ENCODE measurements at regions of chr22 and their contacts with region 1.

Region 1: DNA sequence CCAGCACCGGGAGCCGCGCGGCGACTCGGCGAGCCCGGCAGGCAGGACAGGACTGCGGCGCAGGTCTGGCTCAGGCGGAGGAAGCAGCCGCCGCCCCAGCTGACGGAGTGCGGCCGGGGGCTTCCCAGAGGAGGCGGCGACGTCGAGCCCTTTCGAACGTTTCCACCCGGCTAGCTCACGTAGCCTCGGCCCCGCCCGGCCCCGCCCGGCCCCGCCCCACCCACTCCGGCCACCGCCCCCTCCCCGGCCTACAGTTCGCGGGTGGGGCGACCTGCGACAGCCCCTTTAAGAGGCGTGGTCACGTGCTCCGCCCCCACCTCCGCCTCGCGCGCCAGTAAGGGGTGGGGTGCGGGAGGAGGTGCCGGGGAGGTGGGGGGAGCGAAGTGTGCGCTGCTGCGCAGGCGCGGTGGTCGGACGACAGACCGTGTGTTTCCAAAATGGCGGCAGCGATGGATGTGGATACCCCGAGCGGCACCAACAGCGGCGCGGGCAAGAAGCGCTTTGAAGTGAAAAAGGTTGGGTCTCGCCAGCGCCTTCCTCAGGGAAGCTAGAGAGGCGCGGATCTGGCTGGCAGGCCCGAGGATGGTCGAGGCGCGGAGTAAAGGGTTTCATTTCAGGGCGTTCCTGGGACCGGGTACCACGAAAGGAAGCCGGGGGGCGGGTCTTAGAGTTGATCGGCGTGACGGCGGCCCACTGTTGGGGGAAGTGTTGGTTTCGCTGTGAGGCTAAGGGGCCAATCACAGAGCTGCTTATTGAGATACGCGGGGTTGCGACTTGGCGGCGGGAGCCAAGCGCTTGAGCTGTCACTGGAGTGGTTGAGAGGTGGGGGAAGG is at the start of gene RBX1:
- DNase-seq: peak; percentile 97 to 100 (median 99)
- ATAC-seq: peak; percentile 75
- H3K4me3 ChIP-seq: peak within 1 kb of the TSS; percentile 96
- H3K4me3 Mint-ChIP-seq: peak within 1 kb of the TSS; percentile 95
- H3K27ac ChIP-seq: peak within 1 kb of the TSS; percentile 98 to 100
- H3K27ac Mint-ChIP-seq: peak within 1 kb of the TSS; percentile 98
- H3K4me1 ChIP-seq: peaks cover 34% of the 10 kb centered on the region
- H3K4me1 Mint-ChIP-seq: peaks cover 40% of the 10 kb centered on the region
- H3K27me3 ChIP-seq: no peaks in the 10 kb centered on the region
- H3K27me3 Mint-ChIP-seq: no peaks in the 10 kb centered on the region
- CTCF ChIP-seq: no peak
- total RNA-seq, gene RBX1: 19.8 to 21.6 TPM

Region 2: DNA sequence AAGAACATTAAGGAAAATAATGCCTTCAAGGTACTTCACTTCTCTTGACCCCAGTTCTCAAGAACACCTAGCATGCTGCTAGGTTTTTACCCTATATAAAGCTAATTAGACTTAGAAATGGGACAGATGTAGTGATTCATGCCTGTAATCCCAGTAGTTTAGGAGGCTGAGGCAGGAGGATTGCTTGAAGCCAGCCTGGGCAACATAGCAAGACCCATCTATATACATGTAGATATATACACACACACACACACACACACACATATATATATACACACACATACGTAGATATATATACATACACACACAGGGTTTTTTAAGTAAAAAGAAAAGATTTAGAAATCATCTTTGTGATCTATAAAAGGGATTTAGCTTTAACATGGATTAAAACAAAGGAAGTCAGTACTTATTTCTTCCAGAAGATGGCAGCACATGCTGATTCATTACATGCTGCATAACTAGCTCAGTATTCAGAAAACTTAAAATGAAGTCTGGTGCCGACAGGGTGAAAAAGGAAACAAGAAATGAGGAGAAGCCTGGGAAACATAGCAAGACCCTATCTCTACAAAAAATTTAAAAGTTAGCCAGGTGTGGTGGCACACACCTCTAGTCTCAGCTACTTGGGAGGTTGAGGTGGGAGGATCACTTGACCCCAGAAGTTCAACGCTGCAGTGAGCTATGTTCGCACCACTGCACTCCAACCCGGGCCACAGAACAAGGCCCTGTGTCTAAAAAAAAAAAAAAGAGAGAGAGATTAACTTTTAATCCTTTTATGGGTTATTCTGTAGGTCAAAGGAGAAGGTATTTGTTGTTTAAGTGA is 28.5 kb before region 1 on chr22:
- CTCF ChIA-PET with region 1: interaction called, 10 read pairs
- POLR2A ChIA-PET with region 1: interaction called, 30 read pairs
- intact Hi-C with region 1: loop called (anchors 1 to 2 kb)
- DNase-seq: peak in 6 of 14 experiments; percentile 1 to 84 (median 46)
- ATAC-seq: peak; percentile 98
- H3K4me3 ChIP-seq: no peak overlapping the region
- H3K4me3 Mint-ChIP-seq: peak overlapping the region; percentile 0
- H3K27ac ChIP-seq: no peak overlapping the region
- H3K27ac Mint-ChIP-seq: no peak overlapping the region
- H3K4me1 ChIP-seq: peaks cover 3% of the 10 kb centered on the region
- H3K4me1 Mint-ChIP-seq: peaks cover 5% of the 10 kb centered on the region
- H3K27me3 ChIP-seq: no peaks in the 10 kb centered on the region
- H3K27me3 Mint-ChIP-seq: no peaks in the 10 kb centered on the region
- CTCF ChIP-seq: peak; percentile 78

Region 3: GRCh38 chr22:40982482-40983385 is 31.6 kb after region 1 on chr22:
- CTCF ChIA-PET with region 1: no interaction called
- POLR2A ChIA-PET with region 1: no interaction called
- intact Hi-C with region 1: no loop called
- DNase-seq: no peak
- ATAC-seq: no peak
- H3K4me3 ChIP-seq: no peak overlapping the region
- H3K4me3 Mint-ChIP-seq: no peak overlapping the region
- H3K27ac ChIP-seq: no peak overlapping the region
- H3K27ac Mint-ChIP-seq: no peak overlapping the region
- H3K4me1 ChIP-seq: no peaks in the 10 kb centered on the region
- H3K4me1 Mint-ChIP-seq: no peaks in the 10 kb centered on the region
- H3K27me3 ChIP-seq: no peaks in the 10 kb centered on the region
- H3K27me3 Mint-ChIP-seq: no peaks in the 10 kb centered on the region
- CTCF ChIP-seq: no peak

Region 4: DNA sequence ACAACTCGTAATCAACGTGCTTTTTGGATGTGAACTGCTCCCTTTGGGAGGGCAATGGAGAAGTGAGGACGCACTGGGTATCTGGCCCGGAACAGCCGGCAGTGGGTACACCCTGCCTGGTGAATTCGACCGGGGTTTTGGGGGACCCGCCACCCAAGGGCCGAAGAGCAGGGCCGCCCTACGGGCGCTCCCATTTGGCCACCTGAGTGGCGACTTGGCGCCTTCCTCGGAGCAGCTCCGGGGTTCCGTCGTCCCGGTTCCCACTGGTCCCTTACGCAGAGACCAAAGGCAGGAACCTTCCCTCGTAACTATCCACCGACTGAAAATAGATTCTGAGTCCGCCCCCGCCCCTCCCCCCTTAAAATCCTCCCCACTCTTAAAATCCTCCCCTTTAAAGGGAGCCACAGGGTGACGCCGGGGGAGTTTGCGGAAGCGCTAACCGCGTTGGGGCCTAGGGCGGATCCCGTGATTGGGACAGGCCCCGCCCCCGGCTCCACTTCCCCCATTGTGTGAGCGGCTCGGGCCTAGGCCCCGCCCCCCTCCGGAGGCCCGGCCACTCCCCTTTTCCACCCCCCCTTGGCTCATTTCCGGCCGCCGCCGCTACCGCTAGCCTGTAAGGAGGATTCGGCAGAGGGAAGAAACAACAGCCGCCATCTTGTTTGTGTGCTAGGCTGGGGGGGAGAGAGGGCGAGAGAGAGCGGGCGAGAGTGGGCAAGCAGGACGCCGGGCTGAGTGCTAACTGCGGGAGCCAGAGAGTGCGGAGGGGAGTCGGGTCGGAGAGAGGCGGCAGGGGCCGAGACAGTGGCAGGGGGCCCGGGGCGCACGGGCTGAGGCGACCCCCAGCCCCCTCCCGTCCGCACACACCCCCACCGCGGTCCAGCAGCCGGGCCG is 140.2 kb after region 1 on chr22:
- CTCF ChIA-PET with region 1: interaction called, 3 read pairs
- POLR2A ChIA-PET with region 1: interaction called, 187 read pairs
- intact Hi-C with region 1: loop called (anchors 1 kb)
- DNase-seq: peak; percentile 98 to 100 (median 99)
- ATAC-seq: peak; percentile 85
- H3K4me3 ChIP-seq: peak overlapping the region; percentile 97
- H3K4me3 Mint-ChIP-seq: peak overlapping the region; percentile 99
- H3K27ac ChIP-seq: peak overlapping the region; percentile 97 to 100
- H3K27ac Mint-ChIP-seq: peak overlapping the region; percentile 98
- H3K4me1 ChIP-seq: peaks cover 15% of the 10 kb centered on the region
- H3K4me1 Mint-ChIP-seq: peaks cover 34% of the 10 kb centered on the region
- H3K27me3 ChIP-seq: no peaks in the 10 kb centered on the region
- H3K27me3 Mint-ChIP-seq: no peaks in the 10 kb centered on the region
- CTCF ChIP-seq: no peak

Region 5: GRCh38 chr22:41106122-41106968 is 155.2 kb after region 1 on chr22:
- CTCF ChIA-PET with region 1: no interaction called
- POLR2A ChIA-PET with region 1: interaction called, 10 read pairs
- intact Hi-C with region 1: no loop called
- DNase-seq: no peak
- ATAC-seq: peak; percentile 37
- H3K4me3 ChIP-seq: no peak overlapping the region
- H3K4me3 Mint-ChIP-seq: peak overlapping the region; percentile 31
- H3K27ac ChIP-seq: peak overlapping the region in 1 of 2 donors; percentile 54
- H3K27ac Mint-ChIP-seq: peak overlapping the region; percentile 20
- H3K4me1 ChIP-seq: peaks cover 45% of the 10 kb centered on the region
- H3K4me1 Mint-ChIP-seq: peaks cover 70% of the 10 kb centered on the region
- H3K27me3 ChIP-seq: no peaks in the 10 kb centered on the region
- H3K27me3 Mint-ChIP-seq: no peaks in the 10 kb centered on the region
- CTCF ChIP-seq: no peak

Region 6: GRCh38 chr22:41204992-41205900 is 254.1 kb after region 1 on chr22 and contains the start of gene L3MBTL2:
- CTCF ChIA-PET with region 1: no interaction called
- POLR2A ChIA-PET with region 1: no interaction called
- intact Hi-C with region 1: loop called in 1 of 2 experiments (anchors 2 kb)
- DNase-seq: peak; percentile 95 to 99 (median 98)
- ATAC-seq: peak; percentile 100
- H3K4me3 ChIP-seq: peak within 1 kb of the TSS; percentile 96
- H3K4me3 Mint-ChIP-seq: peak within 1 kb of the TSS; percentile 97
- H3K27ac ChIP-seq: peak within 1 kb of the TSS; percentile 59 to 82
- H3K27ac Mint-ChIP-seq: peak within 1 kb of the TSS; percentile 87
- H3K4me1 ChIP-seq: peaks cover 23% of the 10 kb centered on the region
- H3K4me1 Mint-ChIP-seq: peaks cover 23% of the 10 kb centered on the region
- H3K27me3 ChIP-seq: peaks cover 0 to 6% of the 10 kb centered on the region in 2 experiments
- H3K27me3 Mint-ChIP-seq: no peaks in the 10 kb centered on the region
- CTCF ChIP-seq: no peak
- total RNA-seq, gene L3MBTL2: 16.4 to 17.5 TPM

Region 7: DNA sequence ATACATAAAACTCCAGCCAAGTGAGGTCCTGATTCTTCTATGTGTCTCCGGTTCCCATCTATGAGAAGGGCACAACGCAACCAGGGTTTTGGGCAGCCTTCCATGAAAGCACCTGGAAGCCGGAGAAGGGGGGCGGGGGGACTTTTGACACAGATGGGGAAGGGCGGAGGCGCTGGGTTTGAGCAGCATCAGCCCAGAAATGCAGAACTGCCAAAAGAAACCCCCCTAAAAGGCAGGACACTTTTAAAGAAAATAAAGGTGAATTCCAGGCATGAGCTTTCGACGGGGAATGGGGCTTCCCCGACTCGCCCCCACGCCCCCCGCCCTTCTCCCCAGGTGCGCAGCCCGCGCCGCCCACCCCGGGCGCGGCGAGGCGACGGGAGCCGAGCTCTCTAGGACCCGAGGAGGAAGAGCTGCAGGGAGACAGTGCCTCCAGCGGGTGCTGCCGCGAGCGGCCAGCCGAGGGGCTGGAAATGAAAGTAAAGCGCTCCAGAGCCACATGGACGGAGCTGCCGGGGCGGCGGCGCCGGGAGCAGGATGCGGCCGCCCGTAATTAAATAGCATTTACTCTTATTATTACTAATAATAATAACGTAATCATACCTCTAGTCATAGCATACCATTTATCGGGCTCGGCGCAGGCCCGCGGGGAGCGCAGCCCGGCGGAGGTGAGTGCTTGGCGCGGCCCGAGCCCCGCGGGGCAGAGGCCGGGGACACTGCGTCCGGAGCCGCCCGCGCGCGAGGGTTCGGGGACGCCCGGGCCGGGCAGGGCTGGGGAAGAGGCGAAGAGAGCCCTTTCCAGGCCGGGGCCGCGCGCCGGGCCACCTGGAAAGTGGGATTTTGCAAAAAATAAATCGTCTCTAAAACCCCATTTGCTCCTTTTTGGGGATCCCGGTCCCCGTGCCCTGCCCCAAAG is 350.2 kb after region 1 on chr22 and contains the start of gene ZC3H7B:
- CTCF ChIA-PET with region 1: no interaction called
- POLR2A ChIA-PET with region 1: interaction called, 10 read pairs
- intact Hi-C with region 1: no loop called
- DNase-seq: peak; percentile 71 to 95 (median 79)
- ATAC-seq: peak; percentile 97
- H3K4me3 ChIP-seq: peak within 1 kb of the TSS; percentile 97
- H3K4me3 Mint-ChIP-seq: peak within 1 kb of the TSS; percentile 84
- H3K27ac ChIP-seq: peak within 1 kb of the TSS; percentile 82 to 83
- H3K27ac Mint-ChIP-seq: peak within 1 kb of the TSS; percentile 92
- H3K4me1 ChIP-seq: peaks cover 30% of the 10 kb centered on the region
- H3K4me1 Mint-ChIP-seq: peaks cover 33% of the 10 kb centered on the region
- H3K27me3 ChIP-seq: no peaks in the 10 kb centered on the region
- H3K27me3 Mint-ChIP-seq: no peaks in the 10 kb centered on the region
- CTCF ChIP-seq: peak; percentile 63
- total RNA-seq, gene ZC3H7B: 29.5 to 32.7 TPM

Region 8: GRCh38 chr22:41468381-41469217 is 517.4 kb after region 1 on chr22 and contains the starts of genes ACO2 and PHF5A:
- CTCF ChIA-PET with region 1: no interaction called
- POLR2A ChIA-PET with region 1: interaction called, 11 read pairs
- intact Hi-C with region 1: no loop called
- DNase-seq: peak; percentile 95 to 99 (median 98)
- ATAC-seq: peak; percentile 92
- H3K4me3 ChIP-seq: peak within 1 kb of the TSS; percentile 94
- H3K4me3 Mint-ChIP-seq: peak within 1 kb of the TSS; percentile 89
- H3K27ac ChIP-seq: peak within 1 kb of the TSS; percentile 94 to 98
- H3K27ac Mint-ChIP-seq: peak within 1 kb of the TSS; percentile 97
- H3K4me1 ChIP-seq: peaks cover 27% of the 10 kb centered on the region
- H3K4me1 Mint-ChIP-seq: peaks cover 62% of the 10 kb centered on the region
- H3K27me3 ChIP-seq: no peaks in the 10 kb centered on the region
- H3K27me3 Mint-ChIP-seq: no peaks in the 10 kb centered on the region
- CTCF ChIP-seq: no peak
- total RNA-seq, gene ACO2: 69.5 to 71.9 TPM
- total RNA-seq, gene PHF5A: 41.3 to 44.2 TPM